ENCODE measurements at regions of chr1 and their contacts with region 1.

Region 1: GRCh38 chr1:205907794-205908193 is 35.5 kb downstream of the SLC26A9 start:
- DNase-seq: no peak
- ATAC-seq: peak in 3 of 8 donors; percentile 20 to 71 (median 58)
- H3K4me3 ChIP-seq: no peak overlapping the region
- H3K27ac ChIP-seq: no peak overlapping the region
- H3K4me1 ChIP-seq: peaks cover 0 to 6% (median under 1%) of the 10 kb centered on the region in 9 donors
- H3K27me3 ChIP-seq: no peaks in the 10 kb centered on the region
- CTCF ChIP-seq: peak; percentile 19 to 69 (median 56)

Region 2: DNA sequence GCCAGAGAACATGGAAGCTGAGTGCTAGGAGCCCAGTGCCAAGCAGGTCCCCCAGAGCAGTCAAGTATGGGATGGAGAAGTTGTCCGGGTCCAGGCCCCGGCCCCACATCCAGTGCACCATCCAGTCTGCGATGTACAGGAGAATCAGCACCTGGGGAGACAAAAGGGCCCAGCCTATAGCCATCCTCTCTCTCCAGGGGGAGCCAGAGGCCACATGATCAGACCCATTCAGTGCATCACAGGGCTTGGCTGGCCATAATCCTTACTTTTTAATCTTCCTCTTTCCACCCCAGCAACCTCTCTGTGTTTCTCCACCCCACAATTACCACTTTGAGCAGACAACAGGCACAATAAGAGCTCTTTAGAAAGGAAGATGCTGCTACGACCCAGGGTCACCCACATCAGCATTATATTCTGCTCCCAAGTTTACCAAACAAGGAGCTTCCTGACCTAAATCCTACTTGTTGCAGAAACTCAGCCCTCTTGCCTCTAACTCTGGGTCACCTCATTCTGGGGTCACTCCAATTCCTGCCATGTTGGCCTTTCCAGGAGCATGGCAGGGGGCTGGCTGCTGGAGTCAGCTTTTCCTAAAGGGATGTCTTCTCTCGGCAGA is 116.1 kb before region 1 on chr1:
- intact Hi-C with region 1: loop called in 2 of 10 experiments (anchors 5 kb)
- DNase-seq: peak; percentile 38 to 67
- ATAC-seq: peak; percentile 62 to 83 (median 76)
- H3K4me3 ChIP-seq: no peak overlapping the region
- H3K27ac ChIP-seq: peak overlapping the region in 2 of 10 donors; percentile 15 to 28
- H3K4me1 ChIP-seq: peaks cover 0 to 32% (median 5%) of the 10 kb centered on the region in 9 donors
- H3K27me3 ChIP-seq: no peaks in the 10 kb centered on the region
- CTCF ChIP-seq: peak; percentile 31 to 82 (median 79)

Region 3: DNA sequence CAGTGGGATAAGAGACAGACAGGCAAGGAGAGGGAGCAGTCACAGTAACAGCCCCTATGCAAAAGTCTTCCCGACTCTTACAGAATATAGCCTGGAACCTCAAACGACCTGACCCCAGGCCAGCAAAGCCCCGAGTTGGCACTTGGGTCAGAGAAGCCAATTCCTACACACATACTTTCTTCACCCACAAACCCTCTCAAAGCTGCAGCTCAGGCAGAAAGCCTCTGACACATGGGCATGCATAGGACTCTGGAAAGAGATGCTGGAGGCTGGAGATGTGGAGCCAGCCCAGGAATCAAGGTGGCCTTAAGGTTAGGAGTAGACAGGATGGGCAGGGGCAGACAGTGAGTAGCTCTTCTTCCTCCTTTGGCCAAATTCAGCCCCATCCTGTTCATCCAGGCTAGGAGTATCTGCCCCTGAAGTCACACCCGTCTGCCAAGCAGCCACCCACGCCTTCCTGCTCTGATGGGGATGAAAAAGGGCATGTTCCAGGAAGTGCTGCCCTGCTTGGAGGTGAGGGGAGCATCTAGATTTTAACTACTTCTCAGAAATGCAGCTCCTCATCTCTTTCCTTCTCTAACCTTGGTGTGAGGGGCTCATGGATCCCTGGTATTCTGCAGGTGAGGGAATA is 102.6 kb before region 1 on chr1:
- intact Hi-C with region 1: loop called in 2 of 10 experiments (anchors 5 kb)
- DNase-seq: no peak
- ATAC-seq: no peak
- H3K4me3 ChIP-seq: peak overlapping the region in 6 of 10 donors; percentile 0 to 77 (median 18)
- H3K27ac ChIP-seq: peak overlapping the region in 1 of 10 donors; percentile 25
- H3K4me1 ChIP-seq: peaks cover 3 to 98% (median 63%) of the 10 kb centered on the region in 9 donors
- H3K27me3 ChIP-seq: no peaks in the 10 kb centered on the region
- CTCF ChIP-seq: no peak

Region 4: GRCh38 chr1:206143537-206144172 is 235.9 kb after region 1 on chr1:
- intact Hi-C with region 1: no loop called
- DNase-seq: no peak
- ATAC-seq: no peak
- H3K4me3 ChIP-seq: no peak overlapping the region
- H3K27ac ChIP-seq: no peak overlapping the region
- H3K4me1 ChIP-seq: peaks cover 0 to 3% (median 0%) of the 10 kb centered on the region in 9 donors
- H3K27me3 ChIP-seq: peaks cover 0 to 10% (median 0%) of the 10 kb centered on the region in 7 donors
- CTCF ChIP-seq: no peak

Measured in heart right ventricle (tissue), 16 donors.